ENCODE measurements at regions of chr5 and their contacts with region 1.

Region 1: DNA sequence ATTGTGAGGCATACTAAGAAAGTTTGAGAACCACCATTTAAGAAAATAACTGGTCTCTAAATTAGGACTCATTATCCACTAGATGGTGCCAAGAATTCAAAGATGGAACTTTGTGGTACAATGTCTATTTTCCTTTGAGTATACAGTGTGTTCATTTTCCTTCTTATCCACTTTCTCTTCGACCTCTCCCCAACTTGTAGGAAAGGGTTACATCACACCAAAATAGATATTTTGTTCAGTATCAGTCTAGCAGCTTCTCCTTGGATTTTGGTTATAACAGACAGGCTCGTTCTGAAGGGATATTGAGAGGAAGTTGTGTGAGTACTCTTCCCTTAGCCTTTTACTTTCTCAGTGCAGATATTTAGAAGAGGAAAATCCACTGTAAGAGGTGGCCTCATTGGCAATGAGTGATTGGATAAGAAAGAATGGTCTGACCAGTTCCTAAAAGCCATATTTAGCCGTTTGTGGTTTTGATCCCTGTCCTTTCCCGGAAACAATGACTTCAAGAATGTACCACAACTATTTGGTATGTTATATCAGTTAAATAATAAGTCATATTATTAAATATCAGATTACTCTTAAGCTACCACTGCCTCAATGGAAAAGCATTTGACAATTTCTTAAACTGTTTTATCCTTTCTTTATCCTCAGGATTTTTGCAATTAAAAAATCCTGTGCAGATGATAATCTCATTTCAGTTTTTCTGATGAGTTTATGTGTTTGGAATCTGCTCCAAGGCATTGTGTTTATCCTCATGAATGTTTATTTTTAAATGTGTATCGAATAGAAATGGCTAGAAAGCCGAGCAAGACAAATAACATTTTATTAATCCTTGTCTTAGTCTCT is 69.0 kb upstream of the GRAMD2B start:
- DNase-seq: no peak
- ATAC-seq: peak; percentile 76
- H3K4me3 ChIP-seq: no peak overlapping the region
- H3K4me1 ChIP-seq: peaks cover 5% of the 10 kb centered on the region
- CTCF ChIP-seq: no peak

Region 2: GRCh38 chr5:126536874-126537273 is 182.6 kb after region 1 on chr5:
- intact Hi-C with region 1: loop called (anchors 5 kb)
- DNase-seq: no peak
- ATAC-seq: no peak
- H3K4me3 ChIP-seq: no peak overlapping the region
- H3K4me1 ChIP-seq: no peaks in the 10 kb centered on the region
- CTCF ChIP-seq: no peak

Measured in mucosa of descending colon (tissue), 3 donors.